Mammary epithelial cell (primary cell): ENCODE measurements at regions of chr6 and their contacts with region 1.

Region 1: DNA sequence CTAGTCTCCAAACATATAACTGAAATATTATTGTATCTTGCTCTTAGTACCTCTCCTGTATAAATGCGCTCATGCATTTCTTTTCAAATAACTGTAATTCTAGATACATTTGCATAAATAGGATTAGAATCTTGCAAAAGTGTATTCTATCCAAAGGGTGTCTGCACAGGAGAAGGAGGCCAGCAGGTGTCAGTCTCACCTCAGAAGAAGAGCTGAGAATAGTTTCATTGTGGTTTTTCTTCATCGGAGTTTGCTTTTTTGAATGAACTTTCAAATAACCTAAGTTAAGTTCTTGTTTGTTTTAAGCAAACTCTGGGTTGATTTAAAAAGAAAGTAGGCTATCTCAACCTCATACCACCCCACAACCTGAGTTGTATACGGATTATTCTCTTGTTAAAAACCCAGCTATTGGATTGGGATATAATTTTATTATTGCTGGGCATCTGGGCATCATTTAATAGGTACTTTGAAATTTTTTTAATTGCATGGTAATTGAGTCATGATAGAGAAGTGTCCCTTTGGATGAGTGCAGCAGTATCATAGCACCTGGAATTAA is 125.0 kb upstream of the MLIP start:
- DNase-seq: peak; percentile 39
- H3K4me3 ChIP-seq: no peak overlapping the region
- H3K27ac ChIP-seq: no peak overlapping the region
- H3K4me1 ChIP-seq: peaks cover 38% of the 10 kb centered on the region
- H3K27me3 ChIP-seq: no peaks in the 10 kb centered on the region
- CTCF ChIP-seq: peak; percentile 84 to 90

Region 2: GRCh38 chr6:53888931-53889330 is 97.3 kb before region 1 on chr6:
- CTCF ChIA-PET with region 1: no interaction called
- dilution Hi-C with region 1: no loop called
- in situ Hi-C with region 1: no loop called
- intact Hi-C with region 1: no loop called
- DNase-seq: peak; percentile 20
- H3K4me3 ChIP-seq: no peak overlapping the region
- H3K27ac ChIP-seq: no peak overlapping the region
- H3K4me1 ChIP-seq: peaks cover 6% of the 10 kb centered on the region
- H3K27me3 ChIP-seq: no peaks in the 10 kb centered on the region
- CTCF ChIP-seq: no peak

Region 3: GRCh38 chr6:54244430-54244829 is 258.2 kb after region 1 on chr6:
- CTCF ChIA-PET with region 1: interaction called, 6 read pairs
- dilution Hi-C with region 1: no loop called
- in situ Hi-C with region 1: no loop called
- intact Hi-C with region 1: loop called (anchors 1 kb)
- DNase-seq: peak; percentile 10
- H3K4me3 ChIP-seq: no peak overlapping the region
- H3K27ac ChIP-seq: no peak overlapping the region
- H3K4me1 ChIP-seq: no peaks in the 10 kb centered on the region
- H3K27me3 ChIP-seq: no peaks in the 10 kb centered on the region
- CTCF ChIP-seq: peak; percentile 63 to 67

Region 4: DNA sequence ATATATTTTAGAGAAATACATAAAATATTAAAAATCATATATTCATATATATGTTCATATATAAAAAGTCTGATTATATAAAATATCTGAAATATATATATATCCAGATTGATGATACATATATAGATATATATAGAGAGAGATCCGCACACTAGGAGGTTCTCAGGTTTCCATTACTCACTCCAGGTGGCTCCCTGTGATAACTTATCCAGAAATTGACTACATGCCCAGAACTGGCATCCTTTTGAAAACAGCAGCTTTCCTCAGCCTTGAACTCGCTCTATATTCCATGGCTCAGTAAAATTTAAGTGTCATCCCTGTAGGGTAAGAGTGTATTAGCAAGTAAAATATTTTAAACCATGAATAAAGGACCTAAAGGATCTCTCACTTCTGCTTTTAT is 528.8 kb after region 1 on chr6:
- CTCF ChIA-PET with region 1: no interaction called
- dilution Hi-C with region 1: no loop called
- in situ Hi-C with region 1: no loop called
- intact Hi-C with region 1: loop called (anchors 5 kb)
- DNase-seq: peak; percentile 54
- H3K4me3 ChIP-seq: no peak overlapping the region
- H3K27ac ChIP-seq: no peak overlapping the region
- H3K4me1 ChIP-seq: peaks cover 4% of the 10 kb centered on the region
- H3K27me3 ChIP-seq: no peaks in the 10 kb centered on the region
- CTCF ChIP-seq: peak in 1 of 2 donors; percentile 33

Region 5: GRCh38 chr6:54717849-54718455 is 731.7 kb after region 1 on chr6:
- CTCF ChIA-PET with region 1: interaction called, 7 read pairs
- dilution Hi-C with region 1: no loop called
- in situ Hi-C with region 1: loop called in 1 of 2 experiments (anchors 25 kb)
- intact Hi-C with region 1: loop called (anchors 2 kb)
- DNase-seq: peak; percentile 81
- H3K4me3 ChIP-seq: peak overlapping the region in 2 of 3 experiments; percentile 37 to 43
- H3K27ac ChIP-seq: peak overlapping the region; percentile 91
- H3K4me1 ChIP-seq: peaks cover 22% of the 10 kb centered on the region
- H3K27me3 ChIP-seq: no peaks in the 10 kb centered on the region
- CTCF ChIP-seq: peak; percentile 82 to 85

Region 6: DNA sequence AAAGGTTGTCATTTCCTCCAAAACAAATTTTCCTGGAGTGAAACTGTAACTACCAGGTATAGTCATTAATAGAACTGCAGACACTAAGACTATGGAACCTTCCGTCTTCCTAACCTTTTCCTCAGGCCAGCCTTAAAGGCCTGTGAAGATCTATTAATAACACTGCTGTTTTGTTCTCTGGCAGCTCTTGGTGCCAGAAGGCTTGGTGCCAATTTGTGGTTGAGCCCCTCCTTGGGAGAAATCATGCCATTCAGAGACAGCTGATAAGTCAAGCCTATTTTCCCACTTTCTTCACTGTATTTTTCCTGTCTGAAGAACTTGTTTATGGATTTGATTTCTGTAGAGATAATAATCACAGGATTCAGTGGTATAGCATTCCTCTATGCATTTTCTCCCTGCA is 1252.9 kb after region 1 on chr6:
- CTCF ChIA-PET with region 1: no interaction called
- dilution Hi-C with region 1: no loop called
- in situ Hi-C with region 1: loop called (anchors 10 to 25 kb)
- intact Hi-C with region 1: loop called (anchors 2 kb)
- DNase-seq: peak; percentile 8
- H3K4me3 ChIP-seq: no peak overlapping the region
- H3K27ac ChIP-seq: no peak overlapping the region
- H3K4me1 ChIP-seq: no peaks in the 10 kb centered on the region
- H3K27me3 ChIP-seq: peaks cover 7% of the 10 kb centered on the region
- CTCF ChIP-seq: no peak